ENCODE measurements at regions of chr6 and their contacts with region 1.

Region 1: GRCh38 chr6:128240024-128240428 is 280.4 kb downstream of the PTPRK start:
- DNase-seq: peak in 4 of 9 donors; percentile 5 to 11 (median 8)
- ATAC-seq: peak; percentile 56
- H3K4me3 ChIP-seq: no peak overlapping the region
- H3K4me3 Mint-ChIP-seq: peak overlapping the region in 8 of 10 donors; percentile 34 to 65 (median 55)
- H3K27ac ChIP-seq: no peak overlapping the region
- H3K27ac Mint-ChIP-seq: peak overlapping the region in 7 of 9 donors; percentile 0 to 47 (median 20)
- H3K4me1 ChIP-seq: no peaks in the 10 kb centered on the region
- H3K4me1 Mint-ChIP-seq: peaks cover 0 to 24% (median 16%) of the 10 kb centered on the region in 7 donors
- H3K27me3 ChIP-seq: no peaks in the 10 kb centered on the region
- H3K27me3 Mint-ChIP-seq: no peaks in the 10 kb centered on the region

Region 2: DNA sequence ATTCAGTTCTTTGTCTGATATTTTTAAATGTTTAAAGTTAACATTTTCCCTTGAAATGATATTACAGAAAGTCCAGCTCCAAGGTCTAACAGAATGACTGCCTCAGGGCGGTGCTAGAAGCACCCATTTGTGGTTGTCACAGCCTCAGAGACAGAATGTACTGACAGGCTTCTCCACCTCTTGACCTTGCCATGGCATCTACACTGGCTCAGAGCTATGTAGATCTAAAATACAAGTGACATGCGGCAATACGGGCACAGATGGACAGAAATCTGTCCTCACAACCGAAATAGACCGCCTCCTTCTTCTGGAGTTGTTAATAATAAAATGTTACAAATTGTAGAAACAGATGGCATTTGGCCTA is 171.9 kb before region 1 on chr6:
- CTCF ChIA-PET with region 1: no interaction called
- POLR2A ChIA-PET with region 1: no interaction called
- intact Hi-C with region 1: no loop called
- DNase-seq: no peak
- ATAC-seq: no peak
- H3K4me3 ChIP-seq: no peak overlapping the region
- H3K4me3 Mint-ChIP-seq: no peak overlapping the region
- H3K27ac ChIP-seq: no peak overlapping the region
- H3K27ac Mint-ChIP-seq: no peak overlapping the region
- H3K4me1 ChIP-seq: no peaks in the 10 kb centered on the region
- H3K4me1 Mint-ChIP-seq: peaks cover 0 to 4% (median 0%) of the 10 kb centered on the region in 7 donors
- H3K27me3 ChIP-seq: no peaks in the 10 kb centered on the region
- H3K27me3 Mint-ChIP-seq: no peaks in the 10 kb centered on the region

Region 3: GRCh38 chr6:128225610-128226009 is 14.4 kb before region 1 on chr6:
- CTCF ChIA-PET with region 1: no interaction called
- POLR2A ChIA-PET with region 1: no interaction called
- intact Hi-C with region 1: loop called in 1 of 2 experiments (anchors 2 kb)
- DNase-seq: no peak
- ATAC-seq: no peak
- H3K4me3 ChIP-seq: no peak overlapping the region
- H3K4me3 Mint-ChIP-seq: no peak overlapping the region
- H3K27ac ChIP-seq: no peak overlapping the region
- H3K27ac Mint-ChIP-seq: no peak overlapping the region
- H3K4me1 ChIP-seq: no peaks in the 10 kb centered on the region
- H3K4me1 Mint-ChIP-seq: peaks cover 0 to 2% (median 0%) of the 10 kb centered on the region in 7 donors
- H3K27me3 ChIP-seq: no peaks in the 10 kb centered on the region
- H3K27me3 Mint-ChIP-seq: peaks cover 0 to 8% (median 4%) of the 10 kb centered on the region in 5 donors

Region 4: GRCh38 chr6:128259730-128260685 is 20.0 kb after region 1 on chr6:
- CTCF ChIA-PET with region 1: no interaction called
- POLR2A ChIA-PET with region 1: no interaction called
- intact Hi-C with region 1: loop called in 1 of 2 experiments (anchors 2 kb)
- DNase-seq: peak in 7 of 9 donors; percentile 11 to 42 (median 29)
- ATAC-seq: peak; percentile 74
- H3K4me3 ChIP-seq: peak overlapping the region; percentile 30
- H3K4me3 Mint-ChIP-seq: peak overlapping the region; percentile 67 to 91 (median 84)
- H3K27ac ChIP-seq: peak overlapping the region; percentile 45
- H3K27ac Mint-ChIP-seq: peak overlapping the region; percentile 74 to 93 (median 90)
- H3K4me1 ChIP-seq: peaks cover 12 to 15% of the 10 kb centered on the region in 2 donors
- H3K4me1 Mint-ChIP-seq: peaks cover 15 to 46% (median 28%) of the 10 kb centered on the region in 7 donors
- H3K27me3 ChIP-seq: no peaks in the 10 kb centered on the region
- H3K27me3 Mint-ChIP-seq: peaks cover 0 to 3% (median 0%) of the 10 kb centered on the region in 5 donors